AG04449 (cell line): ENCODE measurements at regions of chr12 and their contacts with region 1.

Region 1: DNA sequence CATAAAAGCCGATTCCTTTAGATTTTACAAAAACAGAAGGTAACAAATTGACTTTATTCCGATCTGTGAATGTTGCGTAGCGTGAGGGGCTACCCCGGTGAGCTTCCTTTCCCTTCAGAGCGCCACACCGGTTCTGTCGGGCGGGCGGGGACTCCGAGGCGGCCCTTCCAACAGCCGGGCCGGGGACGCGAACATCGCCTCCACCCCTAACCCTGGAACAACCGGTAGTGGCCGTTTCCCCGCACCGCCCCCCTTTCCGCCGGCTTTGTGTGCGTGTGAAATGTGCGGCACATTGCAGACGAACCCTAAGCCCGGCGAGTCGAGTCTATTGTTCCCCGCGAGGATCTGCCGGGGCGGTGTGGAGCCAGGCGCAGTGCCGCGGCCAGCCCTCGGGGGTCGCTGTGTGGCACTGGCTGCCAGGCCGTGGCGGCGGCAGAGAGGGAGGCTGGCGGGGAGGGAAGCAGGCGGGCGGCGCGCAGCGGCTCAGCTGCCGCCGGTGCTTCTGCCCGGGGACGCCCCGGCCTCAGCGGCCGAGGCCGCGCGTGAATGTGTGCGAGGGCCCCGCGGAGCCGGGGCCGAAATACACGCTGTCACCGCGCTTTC is 775 bp upstream of the ARID2 start:
- DNase-seq: peak; percentile 71
- H3K4me3 ChIP-seq: peak overlapping the region; percentile 78
- CTCF ChIP-seq: peak; percentile 99

Region 2: GRCh38 chr12:45708901-45709300 is 19.8 kb before region 1 on chr12:
- CTCF ChIA-PET with region 1: interaction called, 22 read pairs
- POLR2A ChIA-PET with region 1: no interaction called
- DNase-seq: no peak
- H3K4me3 ChIP-seq: no peak overlapping the region
- CTCF ChIP-seq: no peak

Region 3: GRCh38 chr12:45718306-45718705 is 10.4 kb before region 1 on chr12:
- CTCF ChIA-PET with region 1: interaction called, 31 read pairs
- POLR2A ChIA-PET with region 1: no interaction called
- DNase-seq: no peak
- H3K4me3 ChIP-seq: no peak overlapping the region
- CTCF ChIP-seq: no peak

Region 4: GRCh38 chr12:46187023-46187422 is 458.3 kb after region 1 on chr12:
- CTCF ChIA-PET with region 1: no interaction called
- POLR2A ChIA-PET with region 1: no interaction called
- DNase-seq: peak; percentile 14
- H3K4me3 ChIP-seq: no peak overlapping the region
- CTCF ChIP-seq: no peak